OCI-LY7 (cell line): ENCODE measurements at regions of chr5 and their contacts with region 1.

Region 1: DNA sequence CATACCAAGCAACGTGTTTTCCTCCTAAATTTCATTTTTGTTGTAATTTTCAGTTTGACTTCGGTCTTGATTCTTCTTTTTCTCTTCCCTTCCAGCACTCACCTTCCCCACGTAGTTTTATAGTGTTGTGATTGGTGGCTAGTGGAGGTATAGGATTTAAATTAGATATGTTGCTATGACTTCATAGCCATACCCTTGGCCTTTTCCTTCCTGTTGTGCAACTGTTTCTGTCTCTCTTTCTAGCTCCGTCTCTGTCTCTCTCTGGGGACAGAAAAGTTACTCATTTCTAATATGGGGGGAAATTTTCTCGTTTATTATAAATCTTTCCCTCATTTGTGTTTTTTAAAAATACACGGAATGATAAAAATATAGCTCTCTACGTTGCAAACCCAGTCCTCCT is 20.6 kb upstream of the C5orf24 start:
- DNase-seq: no peak
- H3K4me3 ChIP-seq: no peak overlapping the region
- H3K27ac ChIP-seq: no peak overlapping the region
- H3K4me1 ChIP-seq: no peaks in the 10 kb centered on the region
- CTCF ChIP-seq: no peak

Region 2: GRCh38 chr5:134749415-134749814 is 75.8 kb before region 1 on chr5:
- CTCF ChIA-PET with region 1: no interaction called
- POLR2A ChIA-PET with region 1: no interaction called
- intact Hi-C with region 1: no loop called
- DNase-seq: no peak
- H3K4me3 ChIP-seq: no peak overlapping the region
- H3K27ac ChIP-seq: peak overlapping the region; percentile 12
- H3K4me1 ChIP-seq: peaks cover 16% of the 10 kb centered on the region
- CTCF ChIP-seq: no peak

Region 3: GRCh38 chr5:134813407-134813806 is 11.8 kb before region 1 on chr5:
- CTCF ChIA-PET with region 1: no interaction called
- POLR2A ChIA-PET with region 1: interaction called, 11 read pairs
- intact Hi-C with region 1: no loop called
- DNase-seq: peak; percentile 67
- H3K4me3 ChIP-seq: no peak overlapping the region
- H3K27ac ChIP-seq: peak overlapping the region; percentile 66
- H3K4me1 ChIP-seq: peaks cover 29% of the 10 kb centered on the region
- CTCF ChIP-seq: no peak